Panc1 (cell line): ENCODE measurements at regions of chr17 and their contacts with region 1.

Region 1: DNA sequence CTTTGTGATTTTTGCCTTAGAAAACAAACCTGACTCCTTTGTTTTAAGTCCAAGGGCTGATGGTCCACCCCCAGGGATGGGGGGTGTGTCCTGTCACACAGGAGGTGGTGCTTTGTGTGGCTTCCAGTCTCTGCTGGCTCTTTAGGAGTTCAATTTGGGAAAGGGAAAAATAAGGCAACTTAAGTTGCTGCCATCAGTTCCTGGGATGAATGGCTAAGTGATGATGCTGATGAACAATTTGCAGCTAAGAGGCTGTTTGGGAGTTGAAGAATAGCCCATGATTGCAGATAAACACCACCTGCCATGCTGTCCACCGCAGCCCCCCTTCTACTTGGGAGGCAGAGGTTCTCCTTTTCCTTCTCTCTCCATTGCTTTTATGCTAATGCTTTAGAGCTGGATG is 40.2 kb downstream of the ARL4D start:
- DNase-seq: no peak
- ATAC-seq: no peak
- H3K4me3 ChIP-seq: no peak overlapping the region
- H3K27ac ChIP-seq: no peak overlapping the region
- H3K4me1 ChIP-seq: peaks cover 2% of the 10 kb centered on the region
- H3K27me3 ChIP-seq: no peaks in the 10 kb centered on the region
- CTCF ChIP-seq: no peak

Region 2: GRCh38 chr17:43456661-43457361 is 17.8 kb after region 1 on chr17:
- CTCF ChIA-PET with region 1: no interaction called
- POLR2A ChIA-PET with region 1: interaction called, 14 read pairs
- in situ Hi-C with region 1: no loop called
- intact Hi-C with region 1: no loop called
- DNase-seq: no peak
- ATAC-seq: no peak
- H3K4me3 ChIP-seq: no peak overlapping the region
- H3K27ac ChIP-seq: no peak overlapping the region
- H3K4me1 ChIP-seq: no peaks in the 10 kb centered on the region
- H3K27me3 ChIP-seq: no peaks in the 10 kb centered on the region
- CTCF ChIP-seq: no peak